Ovary (tissue), 10 donors: ENCODE measurements at regions of chr22 and their contacts with region 1.

Region 1: GRCh38 chr22:20858615-20859416 is at the starts of genes PI4KA and SNAP29:
- DNase-seq: peak; percentile 98 to 99 (median 99)
- H3K4me3 ChIP-seq: peak within 1 kb of the TSS; percentile 88
- H3K27ac ChIP-seq: peak within 1 kb of the TSS; percentile 86 to 91
- H3K4me1 ChIP-seq: peaks cover 6% of the 10 kb centered on the region
- H3K27me3 ChIP-seq: no peaks in the 10 kb centered on the region
- CTCF ChIP-seq: peak in 2 of 3 donors; percentile 57 to 69
- EP300 ChIP-seq: no peak
- POLR2A ChIP-seq: peak; percentile 86
- total RNA-seq, gene PI4KA: 50.0 to 97.6 (median 66.7) TPM
- total RNA-seq, gene SNAP29: 12.1 to 25.1 (median 22.9) TPM

Region 2: DNA sequence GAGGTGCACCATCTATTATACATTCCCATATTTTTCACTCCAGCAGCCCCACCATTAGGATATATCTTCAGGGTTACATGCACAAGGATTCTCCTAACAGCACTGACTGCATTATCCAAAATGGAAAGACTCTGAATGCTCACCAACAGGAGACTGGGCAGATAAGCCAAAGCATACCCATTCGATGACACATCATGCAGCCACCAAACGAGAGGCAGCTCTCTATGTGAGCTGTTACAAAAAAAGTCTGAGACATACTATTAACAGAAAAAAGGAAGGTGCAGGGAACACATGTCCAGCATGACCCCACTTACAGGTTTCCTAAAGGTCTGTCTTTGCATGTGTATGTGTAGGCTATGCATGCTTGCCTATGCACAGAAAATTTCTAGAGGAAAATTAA is 97.3 kb before region 1 on chr22:
- intact Hi-C with region 1: loop called in 1 of 4 experiments (anchors 10 kb)
- DNase-seq: no peak
- H3K4me3 ChIP-seq: no peak overlapping the region
- H3K27ac ChIP-seq: no peak overlapping the region
- H3K4me1 ChIP-seq: no peaks in the 10 kb centered on the region
- H3K27me3 ChIP-seq: no peaks in the 10 kb centered on the region
- CTCF ChIP-seq: no peak
- EP300 ChIP-seq: no peak
- POLR2A ChIP-seq: no peak

Region 3: GRCh38 chr22:20916983-20917810 is 58.4 kb after region 1 on chr22 and contains the start of gene CRKL:
- intact Hi-C with region 1: loop called in 1 of 4 experiments (anchors 5 kb)
- DNase-seq: peak; percentile 97 to 98 (median 97)
- H3K4me3 ChIP-seq: peak within 1 kb of the TSS; percentile 91
- H3K27ac ChIP-seq: peak within 1 kb of the TSS; percentile 64 to 85
- H3K4me1 ChIP-seq: peaks cover 7% of the 10 kb centered on the region
- H3K27me3 ChIP-seq: no peaks in the 10 kb centered on the region
- CTCF ChIP-seq: peak; percentile 94 to 99 (median 97)
- EP300 ChIP-seq: no peak
- POLR2A ChIP-seq: peak; percentile 90
- total RNA-seq, gene CRKL: 42.8 to 71.5 (median 58.0) TPM